Posterior vena cava (tissue), 2 donors: ENCODE measurements at regions of chrX and their contacts with region 1.

Region 1: GRCh38 chrX:100680756-100681155 is 36.8 kb downstream of the SRPX2 start:
- DNase-seq: no peak

Region 2: DNA sequence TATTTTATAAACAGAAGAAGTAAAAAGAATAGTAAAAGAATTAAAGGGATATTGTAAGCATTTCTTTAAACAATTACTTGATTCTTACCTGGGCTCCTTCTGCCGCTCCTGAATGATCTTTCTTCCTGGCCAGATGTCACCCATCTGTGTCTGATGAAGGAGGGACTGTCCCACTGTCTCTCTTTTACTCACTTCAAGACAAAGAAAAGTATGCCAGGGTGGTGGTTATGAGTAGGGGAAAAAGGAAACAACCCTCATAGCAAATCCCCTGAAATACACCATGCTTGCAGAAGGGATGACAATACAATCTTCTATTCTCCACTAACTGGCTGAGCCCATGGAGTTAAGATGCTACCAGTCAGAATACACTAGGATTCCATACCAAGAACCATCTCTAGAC is 20.1 kb after region 1 on chrX:
- intact Hi-C with region 1: no loop called
- DNase-seq: no peak

Region 3: GRCh38 chrX:100768679-100769338 is 88.1 kb after region 1 on chrX:
- intact Hi-C with region 1: loop called in 1 of 2 experiments (anchors 5 kb)
- DNase-seq: peak; percentile 93